HEK293 (cell line): ENCODE measurements at regions of chr2 and their contacts with region 1.

Region 1: DNA sequence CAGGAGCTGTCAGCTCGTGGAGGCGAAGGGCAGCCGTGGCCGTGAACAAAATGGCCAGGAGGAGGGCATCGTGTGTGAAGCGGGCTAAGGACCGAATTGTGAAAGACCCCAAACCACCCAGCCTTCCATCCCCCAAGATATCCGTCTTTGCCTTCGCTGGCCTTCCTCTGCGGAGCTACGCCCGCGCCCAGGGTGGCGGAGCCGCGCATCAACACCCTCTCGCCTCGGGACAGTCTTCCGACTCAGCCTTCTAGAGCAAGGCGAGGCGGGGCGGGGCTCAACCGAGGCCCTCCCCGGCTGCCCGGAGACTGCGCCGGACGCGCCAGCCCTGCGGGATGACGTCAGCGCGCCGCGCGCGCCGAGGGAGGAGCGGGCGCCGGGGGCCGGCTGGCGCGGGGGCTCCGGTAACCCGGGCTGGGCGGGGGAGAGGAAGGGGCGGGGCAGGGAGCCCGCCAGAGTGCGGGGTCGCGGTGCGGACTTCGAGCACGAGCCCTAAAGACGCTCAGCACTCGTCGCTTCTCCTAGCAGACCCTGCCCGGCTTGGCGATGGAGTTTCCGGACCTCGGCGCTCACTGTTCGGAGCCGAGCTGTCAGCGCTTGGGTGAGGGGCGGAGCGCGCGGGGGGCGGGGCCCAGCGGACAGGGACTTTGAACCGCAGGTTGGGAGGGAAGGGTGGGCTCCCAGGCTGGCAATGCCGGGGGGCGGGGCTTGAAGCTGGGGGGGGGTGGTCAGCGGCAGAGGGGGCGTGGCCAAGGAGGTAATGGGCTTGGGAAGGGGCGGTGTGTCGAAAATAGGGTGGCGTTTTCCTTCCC is at the start of gene ZFAND2B:
- H3K4me3 ChIP-seq: peak within 1 kb of the TSS; percentile 76
- H3K27ac ChIP-seq: peak within 1 kb of the TSS; percentile 61
- H3K4me1 ChIP-seq: peaks cover 8% of the 10 kb centered on the region
- CTCF ChIP-seq: peak; percentile 49; the same call in 1 of the 2 replicates

Region 2: GRCh38 chr2:219079417-219079816 is 127.2 kb before region 1 on chr2:
- CTCF ChIA-PET with region 1: no interaction called
- POLR2A ChIA-PET with region 1: no interaction called
- H3K4me3 ChIP-seq: no peak overlapping the region
- H3K27ac ChIP-seq: no peak overlapping the region
- H3K4me1 ChIP-seq: no peaks in the 10 kb centered on the region
- CTCF ChIP-seq: no peak

Region 3: GRCh38 chr2:219177552-219178376 is 28.9 kb before region 1 on chr2 and contains the start of gene RETREG2:
- CTCF ChIA-PET with region 1: interaction called, 3 read pairs
- POLR2A ChIA-PET with region 1: interaction called, 27 read pairs
- H3K4me3 ChIP-seq: peak within 1 kb of the TSS; percentile 78
- H3K27ac ChIP-seq: peak within 1 kb of the TSS; percentile 79
- H3K4me1 ChIP-seq: peaks cover 6% of the 10 kb centered on the region; the same call in 1 of the 2 replicates
- CTCF ChIP-seq: peak; percentile 20; the same call in 1 of the 2 replicates

Region 4: DNA sequence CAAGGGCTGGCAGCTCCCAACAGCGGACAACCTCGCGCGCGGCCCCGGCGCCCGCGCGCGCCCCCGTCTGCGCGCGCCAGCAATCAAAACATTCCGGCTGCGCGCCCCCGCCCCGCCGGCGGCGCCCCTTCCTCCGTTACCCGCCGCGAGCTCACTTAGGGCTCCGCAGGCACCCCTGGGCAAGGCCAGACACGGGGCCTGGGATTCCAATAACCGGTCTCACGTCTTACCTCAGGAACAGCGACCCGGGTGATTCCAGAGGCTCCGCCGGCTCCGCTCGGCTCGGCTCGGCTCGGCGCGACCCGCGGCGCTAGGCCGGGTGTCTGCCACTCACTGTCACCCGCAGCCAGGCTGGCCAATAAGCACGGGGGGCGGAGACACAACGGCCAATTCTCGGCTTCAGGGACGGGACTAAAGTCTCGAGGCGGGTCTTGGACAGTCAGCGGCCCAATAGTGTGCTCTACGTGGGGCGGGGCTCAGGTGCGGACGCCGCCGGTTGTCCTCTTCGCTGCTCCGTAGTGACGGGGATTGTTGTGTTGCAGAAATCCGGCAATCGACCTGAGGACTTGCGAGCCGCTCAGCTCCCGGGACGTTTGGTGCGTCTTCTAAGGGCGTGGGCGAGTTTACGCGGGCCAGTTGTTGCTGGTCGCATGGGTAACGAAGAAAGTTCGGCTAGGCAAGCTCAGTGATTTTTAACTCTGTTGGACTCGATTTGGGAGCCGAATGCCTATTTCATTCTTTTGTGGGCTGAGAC is 22.8 kb after region 1 on chr2 and contains the starts of genes ANKZF1 and ATG9A:
- CTCF ChIA-PET with region 1: no interaction called
- POLR2A ChIA-PET with region 1: interaction called, 11 read pairs
- H3K4me3 ChIP-seq: peak within 1 kb of the TSS; percentile 83
- H3K27ac ChIP-seq: peak within 1 kb of the TSS; percentile 81
- H3K4me1 ChIP-seq: peaks cover 4% of the 10 kb centered on the region; the same call in 1 of the 2 replicates
- CTCF ChIP-seq: no peak

Region 5: GRCh38 chr2:219278655-219279516 is 72.2 kb after region 1 on chr2 and contains the start of gene DNAJB2:
- CTCF ChIA-PET with region 1: interaction called, 4 read pairs
- POLR2A ChIA-PET with region 1: interaction called, 13 read pairs
- H3K4me3 ChIP-seq: peak within 1 kb of the TSS; percentile 54
- H3K27ac ChIP-seq: peak within 1 kb of the TSS; percentile 67
- H3K4me1 ChIP-seq: peaks cover 6% of the 10 kb centered on the region
- CTCF ChIP-seq: no peak